Heart right ventricle (tissue), 16 donors: ENCODE measurements at regions of chr10 and their contacts with region 1.

Region 1: GRCh38 chr10:36423821-36424248 is 701.6 kb upstream of the ANKRD30A start:
- DNase-seq: no peak
- ATAC-seq: no peak
- H3K4me3 ChIP-seq: no peak overlapping the region
- H3K27ac ChIP-seq: peak overlapping the region in 1 of 10 donors; percentile 1
- H3K4me1 ChIP-seq: peaks cover 0 to 6% (median 0%) of the 10 kb centered on the region in 9 donors
- H3K27me3 ChIP-seq: no peaks in the 10 kb centered on the region
- CTCF ChIP-seq: no peak

Region 2: DNA sequence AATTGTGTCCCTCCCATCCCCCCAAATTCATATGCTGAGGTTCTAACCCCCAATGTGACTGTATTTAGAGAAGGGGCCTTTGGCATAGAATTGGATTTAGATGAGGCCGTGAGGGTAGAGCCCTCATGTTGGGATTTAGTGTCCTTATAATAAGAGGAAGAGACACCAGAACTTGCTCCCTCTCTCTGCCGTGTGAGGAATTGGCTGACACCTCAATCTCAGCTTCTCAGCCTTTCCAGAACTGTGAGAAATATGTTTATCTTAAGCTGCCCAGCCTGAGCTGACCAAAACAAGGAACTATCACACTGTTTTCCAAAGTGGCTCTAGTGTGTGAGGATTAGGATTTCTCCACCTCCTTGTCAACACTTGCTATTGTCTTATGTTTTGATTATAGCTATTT is 381.7 kb before region 1 on chr10:
- intact Hi-C with region 1: no loop called
- DNase-seq: no peak
- ATAC-seq: no peak
- H3K4me3 ChIP-seq: no peak overlapping the region
- H3K27ac ChIP-seq: no peak overlapping the region
- H3K4me1 ChIP-seq: no peaks in the 10 kb centered on the region
- H3K27me3 ChIP-seq: no peaks in the 10 kb centered on the region
- CTCF ChIP-seq: no peak

Region 3: DNA sequence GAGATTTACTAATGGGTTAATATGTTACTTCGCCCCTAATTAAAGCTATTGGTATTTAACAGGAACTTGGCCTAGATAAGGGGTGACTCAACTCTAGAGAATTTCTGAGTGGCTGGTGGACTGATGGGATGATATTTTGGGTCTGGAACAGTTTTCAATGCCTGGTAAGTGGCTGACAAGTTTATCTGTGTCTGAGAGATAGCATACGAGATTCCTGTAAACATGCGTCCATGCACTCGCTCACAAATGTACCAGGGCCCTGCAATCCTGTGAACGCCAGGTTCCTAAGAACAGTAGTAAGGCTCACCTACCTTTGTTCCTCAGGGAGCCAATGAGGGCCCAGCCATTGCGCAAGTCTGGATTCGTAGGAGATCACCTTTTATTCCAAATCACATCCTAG is 17.7 kb after region 1 on chr10:
- intact Hi-C with region 1: loop called in 1 of 10 experiments (anchors 2 kb)
- DNase-seq: no peak
- ATAC-seq: peak in 6 of 8 donors; percentile 28 to 99 (median 78)
- H3K4me3 ChIP-seq: no peak overlapping the region
- H3K27ac ChIP-seq: no peak overlapping the region
- H3K4me1 ChIP-seq: peaks cover 0 to 20% (median 0%) of the 10 kb centered on the region in 9 donors
- H3K27me3 ChIP-seq: no peaks in the 10 kb centered on the region
- CTCF ChIP-seq: no peak

Region 4: GRCh38 chr10:36634916-36635315 is 211.1 kb after region 1 on chr10:
- intact Hi-C with region 1: no loop called
- DNase-seq: no peak
- ATAC-seq: no peak
- H3K4me3 ChIP-seq: no peak overlapping the region
- H3K27ac ChIP-seq: no peak overlapping the region
- H3K4me1 ChIP-seq: no peaks in the 10 kb centered on the region
- H3K27me3 ChIP-seq: no peaks in the 10 kb centered on the region
- CTCF ChIP-seq: no peak